ENCODE measurements at regions of chr2 and their contacts with region 1.

Region 1: GRCh38 chr2:28392297-28393113 is at the start of gene FOSL2:
- DNase-seq: peak; percentile 97 to 98 (median 98)
- ATAC-seq: peak; percentile 66 to 85 (median 74)
- H3K4me3 ChIP-seq: peak within 1 kb of the TSS; percentile 82 to 100 (median 96)
- H3K27ac ChIP-seq: peak within 1 kb of the TSS; percentile 94 to 100 (median 100)
- H3K4me1 ChIP-seq: peaks cover 7 to 35% (median 24%) of the 10 kb centered on the region in 12 donors
- H3K27me3 ChIP-seq: no peaks in the 10 kb centered on the region
- CTCF ChIP-seq: peak in 1 of 12 donors; percentile 12
- POLR2A ChIP-seq: peak; percentile 84 to 99
- total RNA-seq, gene FOSL2: 26.2 to 144 (median 50.2) TPM

Region 2: GRCh38 chr2:27715318-27716210 is 676.9 kb before region 1 on chr2:
- intact Hi-C with region 1: loop called in 9 of 10 experiments (anchors 5 to 10 kb)
- DNase-seq: peak; percentile 84 to 90 (median 85)
- ATAC-seq: peak; percentile 78 to 90 (median 88)
- H3K4me3 ChIP-seq: peak overlapping the region; percentile 19 to 60 (median 52)
- H3K27ac ChIP-seq: peak overlapping the region; percentile 85 to 100 (median 92)
- H3K4me1 ChIP-seq: peaks cover 0 to 55% (median 24%) of the 10 kb centered on the region in 12 donors
- H3K27me3 ChIP-seq: peaks cover 0 to 8% (median 0%) of the 10 kb centered on the region in 9 donors
- CTCF ChIP-seq: no peak
- POLR2A ChIP-seq: peak; percentile 64 to 90

Region 3: DNA sequence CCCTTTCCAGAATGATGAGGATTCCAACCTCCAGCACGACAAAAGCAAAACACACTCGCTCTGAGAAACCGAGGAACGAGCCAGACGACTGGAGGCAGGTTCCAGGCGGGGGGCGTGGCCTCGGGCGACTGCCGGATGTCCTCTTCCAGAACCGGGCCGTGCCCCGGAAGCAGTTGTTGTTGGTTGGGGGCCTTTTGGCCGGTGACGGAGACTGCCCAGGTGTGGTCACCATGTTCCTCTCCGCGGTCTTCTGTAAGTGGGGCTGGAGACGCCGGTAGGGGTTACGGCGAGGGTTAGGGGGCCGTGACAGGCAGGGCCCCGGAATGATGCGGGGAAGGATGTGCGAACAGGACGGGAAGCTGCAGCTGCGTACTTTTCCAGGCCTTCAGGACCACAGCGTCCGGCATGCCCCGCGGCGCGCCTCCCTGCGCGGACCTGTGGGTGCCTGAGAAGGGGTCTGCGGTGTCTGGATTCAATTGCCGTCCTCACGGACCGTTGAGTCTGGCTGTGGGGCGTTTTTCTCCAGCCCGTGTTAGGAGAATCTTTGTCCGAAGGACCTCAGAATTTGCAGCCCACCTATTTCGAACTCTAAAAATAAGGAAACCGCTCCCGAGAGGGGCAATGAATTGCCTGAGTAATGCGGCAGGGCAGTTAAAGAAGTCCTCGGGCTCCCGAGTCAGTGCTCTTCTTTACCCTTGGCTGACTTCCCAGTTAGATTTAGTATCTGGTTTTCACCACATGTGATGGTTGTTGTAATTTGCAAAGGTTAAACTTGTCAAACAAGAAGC is 620.8 kb before region 1 on chr2 and contains the start of gene MRPL33:
- intact Hi-C with region 1: loop called in 4 of 10 experiments (anchors 2 to 10 kb)
- DNase-seq: peak; percentile 96 to 98 (median 96)
- ATAC-seq: peak; percentile 95 to 98 (median 98)
- H3K4me3 ChIP-seq: peak within 1 kb of the TSS; percentile 56 to 89 (median 76)
- H3K27ac ChIP-seq: peak within 1 kb of the TSS; percentile 88 to 97 (median 92)
- H3K4me1 ChIP-seq: peaks cover 4 to 50% (median 37%) of the 10 kb centered on the region in 12 donors
- H3K27me3 ChIP-seq: no peaks in the 10 kb centered on the region
- CTCF ChIP-seq: no peak
- POLR2A ChIP-seq: peak in 1 of 2 donors; percentile 61
- total RNA-seq, gene MRPL33: 163 to 503 (median 305) TPM

Region 4: GRCh38 chr2:28009732-28010131 is 382.8 kb before region 1 on chr2:
- intact Hi-C with region 1: loop called in 1 of 10 experiments (anchors 10 kb)
- DNase-seq: peak in 3 of 5 donors; percentile 27 to 49 (median 33)
- ATAC-seq: peak; percentile 81 to 94 (median 88)
- H3K4me3 ChIP-seq: no peak overlapping the region
- H3K27ac ChIP-seq: peak overlapping the region in 1 of 12 donors; percentile 42
- H3K4me1 ChIP-seq: peaks cover 0 to 42% (median 12%) of the 10 kb centered on the region in 12 donors
- H3K27me3 ChIP-seq: no peaks in the 10 kb centered on the region
- CTCF ChIP-seq: no peak
- POLR2A ChIP-seq: no peak

Region 5: GRCh38 chr2:28152585-28153280 is 239.8 kb before region 1 on chr2:
- intact Hi-C with region 1: no loop called
- DNase-seq: no peak
- ATAC-seq: no peak
- H3K4me3 ChIP-seq: no peak overlapping the region
- H3K27ac ChIP-seq: peak overlapping the region in 1 of 12 donors; percentile 13
- H3K4me1 ChIP-seq: peaks cover 0 to 4% (median 0%) of the 10 kb centered on the region in 12 donors
- H3K27me3 ChIP-seq: no peaks in the 10 kb centered on the region
- CTCF ChIP-seq: no peak
- POLR2A ChIP-seq: no peak

Region 6: DNA sequence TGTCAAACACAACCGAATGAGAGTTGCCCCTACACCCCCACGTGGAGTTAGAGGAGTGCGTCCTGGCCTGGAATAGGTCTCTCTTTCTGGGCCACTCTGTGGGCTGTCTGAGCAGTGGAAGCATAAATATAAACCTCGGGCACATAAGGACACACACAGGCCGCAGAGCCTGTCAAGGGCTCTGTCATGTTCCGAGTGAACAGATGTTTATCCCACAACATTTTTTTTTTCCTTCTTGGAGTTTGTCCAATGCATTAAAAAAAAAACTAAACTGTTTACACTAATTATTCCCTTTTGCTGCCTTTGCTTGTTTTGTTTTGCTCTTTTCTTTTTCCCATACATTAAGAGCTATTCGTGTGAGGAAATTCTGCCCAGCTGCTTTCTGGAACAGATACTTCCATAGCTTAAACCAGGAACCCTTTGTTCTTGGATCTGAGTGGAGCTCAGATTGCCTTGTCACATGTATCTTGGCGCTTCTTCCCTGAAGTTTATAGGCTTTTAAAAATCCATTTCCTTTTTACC is 228.2 kb before region 1 on chr2:
- intact Hi-C with region 1: loop called in 5 of 10 experiments (anchors 2 to 10 kb)
- DNase-seq: peak; percentile 30 to 60 (median 50)
- ATAC-seq: peak; percentile 95 to 97 (median 96)
- H3K4me3 ChIP-seq: peak overlapping the region in 1 of 12 donors; percentile 2
- H3K27ac ChIP-seq: peak overlapping the region; percentile 33 to 87 (median 69)
- H3K4me1 ChIP-seq: peaks cover 2 to 57% (median 29%) of the 10 kb centered on the region in 12 donors
- H3K27me3 ChIP-seq: no peaks in the 10 kb centered on the region
- CTCF ChIP-seq: no peak
- POLR2A ChIP-seq: no peak

Region 7: GRCh38 chr2:28338046-28338817 is 54.3 kb before region 1 on chr2:
- intact Hi-C with region 1: loop called in 6 of 10 experiments (anchors 5 kb)
- DNase-seq: peak in 4 of 5 donors; percentile 46 to 82 (median 68)
- ATAC-seq: peak in 3 of 4 donors; percentile 8 to 48 (median 40)
- H3K4me3 ChIP-seq: no peak overlapping the region
- H3K27ac ChIP-seq: peak overlapping the region in 11 of 12 donors; percentile 10 to 65 (median 47)
- H3K4me1 ChIP-seq: peaks cover 0 to 71% (median 54%) of the 10 kb centered on the region in 12 donors
- H3K27me3 ChIP-seq: no peaks in the 10 kb centered on the region
- CTCF ChIP-seq: no peak
- POLR2A ChIP-seq: no peak

Region 8: GRCh38 chr2:28366496-28367282 is 25.8 kb before region 1 on chr2:
- intact Hi-C with region 1: no loop called
- DNase-seq: peak in 1 of 5 donors; percentile 47
- ATAC-seq: peak in 3 of 4 donors; percentile 44 to 77 (median 64)
- H3K4me3 ChIP-seq: peak overlapping the region in 1 of 12 donors; percentile 7
- H3K27ac ChIP-seq: peak overlapping the region in 2 of 12 donors; percentile 8 to 58
- H3K4me1 ChIP-seq: peaks cover 0 to 30% (median 10%) of the 10 kb centered on the region in 12 donors
- H3K27me3 ChIP-seq: no peaks in the 10 kb centered on the region
- CTCF ChIP-seq: no peak
- POLR2A ChIP-seq: no peak

Region 9: DNA sequence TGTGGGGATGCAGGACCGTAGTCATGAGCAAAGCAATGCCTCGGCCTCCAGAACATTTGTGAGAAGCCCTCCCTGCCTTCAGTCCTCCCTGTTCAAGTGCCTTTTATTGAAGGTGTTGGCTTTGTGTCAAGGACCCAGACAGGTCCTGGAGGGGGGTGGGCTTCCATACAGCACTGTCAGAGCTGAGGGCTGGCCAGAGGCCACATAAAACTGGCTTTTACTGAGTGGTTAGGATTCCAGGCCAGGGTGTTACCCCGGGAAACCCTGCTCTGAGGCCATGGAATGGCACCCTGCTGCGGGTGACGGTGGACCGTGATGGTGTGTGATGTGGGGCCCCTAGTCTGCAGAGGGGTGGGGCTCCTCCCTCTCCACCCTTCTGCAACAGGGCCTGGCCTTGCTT is 630.2 kb after region 1 on chr2:
- intact Hi-C with region 1: no loop called
- DNase-seq: no peak
- ATAC-seq: no peak
- H3K4me3 ChIP-seq: no peak overlapping the region
- H3K27ac ChIP-seq: no peak overlapping the region
- H3K4me1 ChIP-seq: peaks cover 0 to 8% (median 0%) of the 10 kb centered on the region in 12 donors
- H3K27me3 ChIP-seq: no peaks in the 10 kb centered on the region
- CTCF ChIP-seq: no peak
- POLR2A ChIP-seq: no peak

Measured in heart left ventricle (tissue), 16 donors.